PC-9 (cell line): ENCODE measurements at regions of chr20 and their contacts with region 1.

Region 1: DNA sequence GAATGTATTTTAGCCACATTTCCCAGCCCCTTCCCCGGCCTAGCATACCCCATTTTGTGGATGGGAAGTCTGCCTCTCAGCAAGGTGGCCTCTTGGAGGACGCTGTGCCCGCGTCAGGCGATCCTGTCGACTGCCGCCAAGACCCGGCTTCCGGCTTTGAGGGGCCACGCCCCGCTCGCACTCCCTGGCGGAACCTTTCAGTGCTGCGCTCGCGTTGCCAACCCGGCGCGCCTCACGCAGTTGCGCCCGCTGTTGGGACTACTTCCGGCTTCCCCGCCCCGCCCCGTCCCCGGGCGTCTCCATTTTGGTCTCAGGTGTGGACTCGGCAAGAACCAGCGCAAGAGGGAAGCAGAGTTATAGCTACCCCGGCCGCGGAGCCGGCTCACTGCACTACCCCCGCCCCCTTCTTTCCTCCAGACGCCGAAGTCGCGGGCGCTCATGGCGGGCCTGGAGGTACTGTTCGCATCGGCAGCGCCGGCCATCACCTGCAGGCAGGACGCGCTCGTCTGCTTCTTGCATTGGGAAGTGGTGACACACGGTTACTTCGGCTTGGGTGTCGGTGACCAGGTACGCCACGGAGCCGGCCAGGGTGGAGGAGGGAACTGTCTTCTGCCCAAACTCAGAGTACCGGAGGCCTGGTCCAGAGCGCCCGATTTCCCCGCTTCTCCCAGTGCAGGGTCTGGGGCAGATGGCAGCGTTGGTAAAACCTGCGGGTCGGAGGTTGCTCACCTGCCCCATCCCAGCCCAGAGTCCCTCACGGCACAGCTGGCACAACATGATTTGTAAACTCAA is at the start of gene PSMF1:
- DNase-seq: peak; percentile 84 to 96
- H3K4me3 ChIP-seq: peak within 1 kb of the TSS; percentile 62
- H3K27ac ChIP-seq: peak within 1 kb of the TSS; percentile 51
- H3K4me1 ChIP-seq: peaks cover 27% of the 10 kb centered on the region
- H3K27me3 ChIP-seq: no peaks in the 10 kb centered on the region
- CTCF ChIP-seq: no peak
- total RNA-seq, gene PSMF1: 166 and 186 TPM in 2 replicates

Region 2: DNA sequence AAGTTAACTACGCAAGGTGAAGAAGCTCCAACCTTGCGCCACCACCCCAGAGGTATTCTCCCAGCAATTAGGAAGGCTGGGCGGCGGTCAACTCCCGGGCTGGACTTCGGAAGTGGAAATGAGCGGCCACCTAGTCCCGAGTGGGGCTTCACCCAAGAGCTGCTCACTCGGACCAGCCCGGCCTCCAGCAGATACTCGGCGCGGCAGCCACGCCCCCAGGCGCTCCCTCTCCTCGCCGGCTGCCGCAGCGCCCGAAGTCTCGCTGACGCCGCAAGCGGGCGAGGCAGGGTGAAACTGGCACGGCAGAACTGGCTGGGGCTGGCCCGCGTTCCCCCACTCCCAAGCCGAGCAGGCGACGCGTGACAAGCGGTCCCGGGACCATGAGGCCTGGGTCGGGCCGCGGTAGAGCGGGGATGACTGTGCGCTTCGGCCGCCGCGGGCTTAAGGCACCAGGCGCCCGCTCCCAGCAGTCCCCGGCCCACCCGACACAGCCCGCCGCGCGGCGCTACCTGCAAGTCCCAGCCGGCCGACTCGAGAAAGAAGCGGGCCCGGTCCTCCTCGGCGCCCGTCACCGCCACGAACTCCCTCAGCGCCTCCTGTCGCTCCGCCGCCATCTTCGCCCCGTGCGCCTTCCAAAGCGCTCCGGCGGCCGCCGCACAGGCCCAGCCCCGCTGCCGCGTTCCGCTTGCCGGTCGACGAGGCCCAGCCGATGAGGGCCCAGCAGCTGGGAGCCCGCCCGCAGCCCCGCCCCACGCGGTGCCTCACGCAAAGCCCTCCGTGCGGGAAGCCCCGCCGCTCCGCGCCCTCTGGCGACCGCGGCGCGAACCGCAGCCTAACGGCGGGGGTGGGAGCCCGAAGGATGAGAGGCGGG is 347.9 kb after region 1 on chr20 and contains the start of gene NSFL1C:
- CTCF ChIA-PET with region 1: no interaction called
- POLR2A ChIA-PET with region 1: no interaction called
- intact Hi-C with region 1: loop called (anchors 1 kb)
- DNase-seq: peak; percentile 79 to 98
- H3K4me3 ChIP-seq: peak within 1 kb of the TSS; percentile 88
- H3K27ac ChIP-seq: peak within 1 kb of the TSS; percentile 89
- H3K4me1 ChIP-seq: peaks cover 37% of the 10 kb centered on the region
- H3K27me3 ChIP-seq: no peaks in the 10 kb centered on the region
- CTCF ChIP-seq: peak; percentile 89
- total RNA-seq, gene NSFL1C: 151 and 160 TPM in 2 replicates

Region 3: GRCh38 chr20:1776681-1777475 is 658.3 kb after region 1 on chr20:
- CTCF ChIA-PET with region 1: no interaction called
- POLR2A ChIA-PET with region 1: no interaction called
- intact Hi-C with region 1: loop called (anchors 5 kb)
- DNase-seq: peak; percentile 86 to 90
- H3K4me3 ChIP-seq: peak overlapping the region; percentile 70
- H3K27ac ChIP-seq: peak overlapping the region; percentile 74
- H3K4me1 ChIP-seq: peaks cover 27% of the 10 kb centered on the region
- H3K27me3 ChIP-seq: no peaks in the 10 kb centered on the region
- CTCF ChIP-seq: peak; percentile 89